Endothelial cell of umbilical vein (primary cell): ENCODE measurements at regions of chr6 and their contacts with region 1.

Region 1: DNA sequence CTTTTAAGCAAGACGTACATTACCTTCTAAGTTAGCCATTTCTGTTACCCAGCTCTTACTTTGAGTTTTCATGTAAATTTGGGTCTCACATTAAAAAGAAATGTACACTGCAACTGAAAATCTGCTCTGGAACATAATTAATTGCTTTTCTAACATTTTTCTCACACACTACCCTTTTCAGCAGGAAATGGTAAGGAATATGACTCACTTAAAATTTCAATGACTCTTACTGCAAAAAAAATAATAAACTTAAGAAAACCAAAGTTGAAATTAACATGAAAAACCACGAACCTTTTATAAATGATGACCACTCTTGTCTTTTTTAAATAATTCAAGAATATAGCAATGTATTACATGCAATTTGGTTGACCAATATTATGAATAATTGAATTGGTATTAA is 1.3 kb downstream of the CGA start:
- DNase-seq: peak; percentile 51
- H3K4me3 ChIP-seq: no peak overlapping the region
- H3K27ac ChIP-seq: no peak overlapping the region
- H3K4me1 ChIP-seq: peaks cover 11% of the 10 kb centered on the region
- H3K27me3 ChIP-seq: peaks cover 0 to 8% of the 10 kb centered on the region in 2 experiments
- CTCF ChIP-seq: no peak
- POLR2A ChIP-seq: no peak

Region 2: GRCh38 chr6:87078983-87079616 is 14.6 kb before region 1 on chr6:
- CTCF ChIA-PET with region 1: interaction called, 34 read pairs
- POLR2A ChIA-PET with region 1: no interaction called
- dilution Hi-C with region 1: no loop called
- intact Hi-C with region 1: no loop called
- DNase-seq: peak; percentile 61
- H3K4me3 ChIP-seq: no peak overlapping the region
- H3K27ac ChIP-seq: no peak overlapping the region
- H3K4me1 ChIP-seq: no peaks in the 10 kb centered on the region
- H3K27me3 ChIP-seq: peaks cover 0 to 3% of the 10 kb centered on the region in 2 experiments
- CTCF ChIP-seq: peak; percentile 92 to 97
- POLR2A ChIP-seq: no peak

Region 3: DNA sequence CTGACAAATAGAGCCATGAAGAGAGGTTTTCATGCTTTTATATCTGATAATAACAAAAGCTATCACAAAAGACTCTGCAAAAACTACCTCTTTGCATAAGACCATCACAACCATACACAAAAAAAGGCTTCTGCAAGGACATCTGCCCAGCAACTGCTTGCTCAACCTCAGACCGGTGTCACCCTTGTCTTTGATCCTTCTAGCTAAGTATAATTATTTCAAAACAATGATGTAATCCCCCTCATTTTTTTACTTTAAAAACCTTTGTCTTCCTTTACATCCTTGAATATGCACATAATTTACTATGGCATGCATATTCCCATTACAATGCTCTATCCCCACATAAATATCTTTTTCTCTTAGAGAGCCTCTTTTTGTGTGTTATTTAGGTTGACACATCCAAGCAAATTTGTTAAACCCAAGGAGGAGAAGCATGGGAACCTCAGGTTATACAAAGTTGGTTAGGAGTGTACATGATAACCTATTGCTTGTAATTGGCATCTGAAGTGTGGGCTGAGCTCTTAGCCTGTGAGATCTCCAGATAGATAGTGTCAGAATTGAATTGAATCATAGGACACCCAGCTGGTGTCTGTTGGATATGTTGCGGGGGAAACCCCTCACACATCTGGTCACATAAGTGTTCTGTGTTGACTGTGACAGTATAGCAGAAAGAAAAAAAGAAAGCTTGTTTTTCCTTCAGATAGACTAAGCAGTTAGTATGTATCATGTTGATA is 21.9 kb after region 1 on chr6:
- CTCF ChIA-PET with region 1: no interaction called
- POLR2A ChIA-PET with region 1: no interaction called
- dilution Hi-C with region 1: no loop called
- intact Hi-C with region 1: no loop called
- DNase-seq: no peak
- H3K4me3 ChIP-seq: no peak overlapping the region
- H3K27ac ChIP-seq: no peak overlapping the region
- H3K4me1 ChIP-seq: no peaks in the 10 kb centered on the region
- H3K27me3 ChIP-seq: peaks cover 0 to 2% of the 10 kb centered on the region in 2 experiments
- CTCF ChIP-seq: no peak
- POLR2A ChIP-seq: no peak

Region 4: GRCh38 chr6:87154993-87155841 is 61.6 kb after region 1 on chr6 and contains the start of gene ZNF292:
- CTCF ChIA-PET with region 1: no interaction called
- POLR2A ChIA-PET with region 1: no interaction called
- dilution Hi-C with region 1: no loop called
- intact Hi-C with region 1: no loop called
- DNase-seq: peak; percentile 98
- H3K4me3 ChIP-seq: peak within 1 kb of the TSS; percentile 60 to 91 (median 89)
- H3K27ac ChIP-seq: peak within 1 kb of the TSS; percentile 96
- H3K4me1 ChIP-seq: peaks cover 35% of the 10 kb centered on the region
- H3K27me3 ChIP-seq: no peaks in the 10 kb centered on the region
- CTCF ChIP-seq: no peak
- POLR2A ChIP-seq: no peak
- total RNA-seq, gene ZNF292: 23.8 and 24.9 TPM in 2 replicates

Region 5: DNA sequence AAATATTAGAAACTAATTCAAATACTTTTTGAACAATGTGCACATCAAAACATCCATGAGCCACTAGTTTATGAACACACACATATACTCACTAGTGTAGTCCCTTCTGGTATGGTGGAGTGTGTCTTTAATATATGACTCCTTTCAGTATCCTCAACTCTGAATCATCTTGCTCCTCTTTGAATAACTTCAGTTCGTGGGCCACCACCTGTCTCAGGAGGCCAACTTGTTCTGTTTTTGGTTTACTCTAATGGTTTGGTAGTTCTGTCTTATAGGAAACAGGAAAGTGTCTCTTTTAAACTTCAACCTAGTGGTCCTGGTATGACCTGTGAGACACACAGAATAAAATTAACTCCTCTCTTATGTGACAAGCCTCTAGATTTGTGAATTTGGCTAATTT is 117.3 kb after region 1 on chr6:
- CTCF ChIA-PET with region 1: no interaction called
- POLR2A ChIA-PET with region 1: no interaction called
- dilution Hi-C with region 1: no loop called
- intact Hi-C with region 1: no loop called
- DNase-seq: no peak
- H3K4me3 ChIP-seq: no peak overlapping the region
- H3K27ac ChIP-seq: no peak overlapping the region
- H3K4me1 ChIP-seq: no peaks in the 10 kb centered on the region
- H3K27me3 ChIP-seq: no peaks in the 10 kb centered on the region
- CTCF ChIP-seq: no peak
- POLR2A ChIP-seq: no peak